ENCODE measurements at regions of chr7 and their contacts with region 1.

Region 1: DNA sequence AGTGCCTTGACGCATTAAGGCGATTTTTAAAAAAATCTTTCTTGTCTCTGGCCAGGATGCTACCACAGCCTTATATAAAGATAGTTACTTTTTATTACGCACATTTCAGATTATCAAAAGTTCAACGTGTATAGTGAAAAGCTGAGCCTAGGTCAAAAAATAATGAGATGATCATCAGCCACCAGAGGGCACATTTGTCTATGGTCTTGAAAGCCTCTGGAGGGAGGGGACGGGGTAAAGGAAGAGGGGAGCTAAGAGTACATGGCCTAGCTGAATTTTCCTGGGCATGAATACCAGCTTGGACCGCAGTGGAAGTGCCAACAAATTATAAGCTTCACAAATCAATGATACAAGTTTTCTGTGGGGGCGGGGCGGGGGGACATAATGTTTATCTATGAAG is 285.9 kb upstream of the SMIM30 start:
- DNase-seq: no peak
- H3K4me3 ChIP-seq: no peak overlapping the region
- H3K27ac ChIP-seq: no peak overlapping the region
- H3K4me1 ChIP-seq: no peaks in the 10 kb centered on the region
- H3K27me3 ChIP-seq: no peaks in the 10 kb centered on the region
- CTCF ChIP-seq: no peak
- POLR2A ChIP-seq: no peak

Region 2: GRCh38 chr7:113307147-113307546 is 97.1 kb before region 1 on chr7:
- intact Hi-C with region 1: loop called (anchors 10 kb)
- DNase-seq: no peak
- H3K4me3 ChIP-seq: no peak overlapping the region
- H3K27ac ChIP-seq: no peak overlapping the region
- H3K4me1 ChIP-seq: no peaks in the 10 kb centered on the region
- H3K27me3 ChIP-seq: no peaks in the 10 kb centered on the region
- CTCF ChIP-seq: no peak
- POLR2A ChIP-seq: no peak

Region 3: DNA sequence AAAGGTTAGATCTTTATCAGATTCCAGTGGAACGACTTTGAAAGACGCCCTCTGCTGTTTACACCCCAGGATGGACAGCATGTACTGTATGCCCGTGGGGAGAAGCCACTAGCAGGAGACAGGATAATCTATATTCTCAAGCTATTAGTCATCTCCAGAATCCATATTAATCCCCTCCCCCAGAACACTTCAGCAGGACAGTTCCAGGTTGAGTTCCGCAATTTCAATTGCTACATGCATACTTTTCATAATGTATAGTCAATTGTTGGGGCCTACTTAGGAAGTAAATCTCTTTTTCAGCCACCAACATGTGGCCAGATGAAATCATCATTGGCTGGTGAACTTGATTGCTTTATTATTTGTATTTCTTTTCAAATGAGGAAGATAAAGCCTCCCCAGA is 27.2 kb after region 1 on chr7:
- intact Hi-C with region 1: no loop called
- DNase-seq: no peak
- H3K4me3 ChIP-seq: no peak overlapping the region
- H3K27ac ChIP-seq: no peak overlapping the region
- H3K4me1 ChIP-seq: no peaks in the 10 kb centered on the region
- H3K27me3 ChIP-seq: no peaks in the 10 kb centered on the region
- CTCF ChIP-seq: no peak
- POLR2A ChIP-seq: no peak

Region 4: GRCh38 chr7:113460067-113460466 is 55.8 kb after region 1 on chr7:
- intact Hi-C with region 1: no loop called
- DNase-seq: no peak
- H3K4me3 ChIP-seq: no peak overlapping the region
- H3K27ac ChIP-seq: no peak overlapping the region
- H3K4me1 ChIP-seq: no peaks in the 10 kb centered on the region
- H3K27me3 ChIP-seq: no peaks in the 10 kb centered on the region
- CTCF ChIP-seq: no peak
- POLR2A ChIP-seq: no peak

Region 5: GRCh38 chr7:114832906-114833595 is 1428.8 kb after region 1 on chr7:
- intact Hi-C with region 1: no loop called
- DNase-seq: no peak
- H3K4me3 ChIP-seq: no peak overlapping the region
- H3K27ac ChIP-seq: no peak overlapping the region
- H3K4me1 ChIP-seq: no peaks in the 10 kb centered on the region
- H3K27me3 ChIP-seq: no peaks in the 10 kb centered on the region
- CTCF ChIP-seq: no peak
- POLR2A ChIP-seq: no peak